T-cell (primary cell): ENCODE measurements at regions of chr12 and their contacts with region 1.

Region 1: GRCh38 chr12:101759396-101760047 is 20.3 kb upstream of the SYCP3 start:
- DNase-seq: peak in 3 of 35 experiments; percentile 8 to 56 (median 11)
- ATAC-seq: peak in 2 of 4 experiments; percentile 56 to 63
- H3K4me3 ChIP-seq: no peak overlapping the region
- H3K4me3 Mint-ChIP-seq: no peak overlapping the region
- H3K27ac ChIP-seq: no peak overlapping the region
- H3K27ac Mint-ChIP-seq: no peak overlapping the region
- H3K4me1 ChIP-seq: no peaks in the 10 kb centered on the region
- H3K4me1 Mint-ChIP-seq: no peaks in the 10 kb centered on the region
- H3K27me3 ChIP-seq: no peaks in the 10 kb centered on the region
- H3K27me3 Mint-ChIP-seq: no peaks in the 10 kb centered on the region

Region 2: GRCh38 chr12:101414533-101415119 is 344.9 kb before region 1 on chr12:
- CTCF ChIA-PET with region 1: interaction called in 1 of 2 experiments, 17 read pairs
- POLR2A ChIA-PET with region 1: no interaction called
- DNase-seq: peak in 4 of 35 experiments; percentile 2 to 49 (median 5)
- ATAC-seq: no peak
- H3K4me3 ChIP-seq: no peak overlapping the region
- H3K4me3 Mint-ChIP-seq: no peak overlapping the region
- H3K27ac ChIP-seq: no peak overlapping the region
- H3K27ac Mint-ChIP-seq: no peak overlapping the region
- H3K4me1 ChIP-seq: no peaks in the 10 kb centered on the region
- H3K4me1 Mint-ChIP-seq: no peaks in the 10 kb centered on the region
- H3K27me3 ChIP-seq: no peaks in the 10 kb centered on the region
- H3K27me3 Mint-ChIP-seq: peaks cover 4% of the 10 kb centered on the region in 2 donors

Region 3: GRCh38 chr12:101743724-101744472 is 15.6 kb before region 1 on chr12:
- CTCF ChIA-PET with region 1: interaction called in 1 of 2 experiments, 15 read pairs
- POLR2A ChIA-PET with region 1: interaction called in 1 of 2 experiments, 3 read pairs
- DNase-seq: peak in 14 of 35 experiments; percentile 4 to 47 (median 14)
- ATAC-seq: peak in 3 of 4 experiments; percentile 58 to 62 (median 61)
- H3K4me3 ChIP-seq: no peak overlapping the region
- H3K4me3 Mint-ChIP-seq: no peak overlapping the region
- H3K27ac ChIP-seq: peak overlapping the region; percentile 25
- H3K27ac Mint-ChIP-seq: peak overlapping the region; percentile 49 to 58
- H3K4me1 ChIP-seq: peaks cover 0 to 9% of the 10 kb centered on the region in 2 experiments
- H3K4me1 Mint-ChIP-seq: peaks cover 5 to 16% (median 7%) of the 10 kb centered on the region in 3 donors
- H3K27me3 ChIP-seq: no peaks in the 10 kb centered on the region
- H3K27me3 Mint-ChIP-seq: no peaks in the 10 kb centered on the region

Region 4: GRCh38 chr12:101780599-101780998 is 21.1 kb after region 1 on chr12:
- CTCF ChIA-PET with region 1: no interaction called
- POLR2A ChIA-PET with region 1: no interaction called
- DNase-seq: no peak
- ATAC-seq: no peak
- H3K4me3 ChIP-seq: no peak overlapping the region
- H3K4me3 Mint-ChIP-seq: no peak overlapping the region
- H3K27ac ChIP-seq: no peak overlapping the region
- H3K27ac Mint-ChIP-seq: peak overlapping the region in 1 of 2 donors; percentile 73
- H3K4me1 ChIP-seq: no peaks in the 10 kb centered on the region
- H3K4me1 Mint-ChIP-seq: peaks cover 2 to 8% (median 6%) of the 10 kb centered on the region in 3 donors
- H3K27me3 ChIP-seq: no peaks in the 10 kb centered on the region
- H3K27me3 Mint-ChIP-seq: no peaks in the 10 kb centered on the region

Region 5: DNA sequence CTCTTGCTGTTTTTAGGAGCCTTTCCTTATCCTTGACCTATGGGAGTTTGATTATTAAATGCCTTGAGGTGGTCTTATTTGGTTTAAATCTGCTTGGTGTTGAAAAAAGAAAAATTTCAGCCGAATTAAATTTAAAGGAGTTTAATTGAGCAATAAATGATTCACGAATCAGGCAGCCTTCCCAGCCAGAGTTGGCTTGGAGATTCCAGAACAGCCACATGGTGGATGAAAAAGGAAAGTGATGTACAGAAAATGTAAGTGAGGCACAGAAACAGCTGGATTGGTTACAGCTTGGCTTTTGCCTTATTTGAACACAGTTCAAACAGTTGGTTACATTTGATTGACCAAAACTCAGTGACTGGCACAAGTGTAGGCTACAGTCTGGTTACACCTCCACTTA is 232.6 kb after region 1 on chr12:
- CTCF ChIA-PET with region 1: no interaction called
- POLR2A ChIA-PET with region 1: no interaction called
- DNase-seq: no peak
- ATAC-seq: no peak
- H3K4me3 ChIP-seq: no peak overlapping the region
- H3K4me3 Mint-ChIP-seq: no peak overlapping the region
- H3K27ac ChIP-seq: no peak overlapping the region
- H3K27ac Mint-ChIP-seq: no peak overlapping the region
- H3K4me1 ChIP-seq: no peaks in the 10 kb centered on the region
- H3K4me1 Mint-ChIP-seq: no peaks in the 10 kb centered on the region
- H3K27me3 ChIP-seq: peaks cover 0 to 10% of the 10 kb centered on the region in 2 experiments
- H3K27me3 Mint-ChIP-seq: peaks cover 25 to 30% of the 10 kb centered on the region in 2 donors